ENCODE measurements at regions of chr7 and their contacts with region 1.

Region 1: DNA sequence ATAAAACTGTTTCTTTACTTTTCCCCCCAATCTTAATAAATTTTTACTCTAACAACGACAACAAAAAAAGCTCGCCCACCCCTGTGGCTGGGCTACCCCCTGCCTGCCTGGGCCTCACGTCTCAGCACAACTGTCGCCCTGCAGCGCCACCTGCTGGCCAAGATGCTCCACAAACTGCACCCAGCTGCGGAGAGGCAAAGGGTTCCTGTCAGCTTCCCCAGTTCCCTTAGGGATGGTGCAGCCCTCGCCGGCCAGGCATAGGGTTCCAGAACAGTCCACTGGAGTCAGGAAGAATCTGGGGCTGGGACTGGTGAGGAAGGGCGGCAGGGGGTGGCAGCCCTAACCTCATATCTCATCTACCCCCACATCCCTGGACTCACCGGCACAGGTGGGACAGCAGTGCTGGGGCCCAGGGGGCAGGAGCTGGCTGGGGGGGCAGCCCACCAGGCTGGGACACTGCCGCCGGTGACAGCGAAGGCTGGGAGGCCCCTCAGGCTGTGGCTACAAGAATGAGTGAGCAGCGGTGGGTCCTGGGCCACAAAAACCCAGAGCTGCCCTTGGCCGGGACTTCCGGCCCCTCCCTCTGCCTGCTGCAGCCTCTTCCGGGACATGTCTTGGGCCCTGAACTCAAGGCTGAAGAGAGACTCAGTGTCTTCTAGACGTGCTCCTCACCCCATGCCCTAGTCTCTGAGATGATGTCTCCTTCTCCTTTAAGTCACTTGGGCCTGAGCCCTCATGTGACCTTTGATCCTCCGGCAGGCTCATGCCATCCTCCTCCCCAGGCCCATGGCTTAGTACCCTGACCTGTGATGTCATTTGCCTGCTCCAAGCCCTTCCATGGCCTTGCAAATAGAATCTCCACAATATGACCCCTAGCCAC is 21.2 kb downstream of the ATP6V1F start:
- DNase-seq: peak; percentile 48
- ATAC-seq: peak; percentile 95
- H3K4me3 ChIP-seq: peak overlapping the region; percentile 70
- H3K27ac ChIP-seq: peak overlapping the region; percentile 74
- H3K4me1 ChIP-seq: peaks cover 12% of the 10 kb centered on the region
- H3K27me3 ChIP-seq: no peaks in the 10 kb centered on the region
- CTCF ChIP-seq: peak; percentile 90 to 96 (median 91)
- EP300 ChIP-seq: no peak; a peak in 1 of 4 replicates
- POLR2A ChIP-seq: peak; percentile 77
- RAD21 ChIP-seq: peak; percentile 81

Region 2: GRCh38 chr7:128266883-128267607 is 616.8 kb before region 1 on chr7:
- CTCF ChIA-PET with region 1: no interaction called
- POLR2A ChIA-PET with region 1: no interaction called
- RAD21 ChIA-PET with region 1: no interaction called
- SMC1A ChIA-PET with region 1: no interaction called
- in situ Hi-C with region 1: no loop called
- intact Hi-C with region 1: no loop called
- DNase-seq: no peak
- ATAC-seq: no peak
- H3K4me3 ChIP-seq: no peak overlapping the region
- H3K27ac ChIP-seq: no peak overlapping the region
- H3K4me1 ChIP-seq: no peaks in the 10 kb centered on the region
- H3K27me3 ChIP-seq: peaks cover 0 to 2% of the 10 kb centered on the region in 2 experiments; a peak in 2 of 4 replicates
- CTCF ChIP-seq: no peak
- EP300 ChIP-seq: no peak
- POLR2A ChIP-seq: no peak
- RAD21 ChIP-seq: no peak

Region 3: GRCh38 chr7:128455551-128456254 is 428.2 kb before region 1 on chr7 and contains the start of gene HILPDA:
- CTCF ChIA-PET with region 1: no interaction called
- POLR2A ChIA-PET with region 1: no interaction called
- RAD21 ChIA-PET with region 1: interaction called, 4 read pairs
- SMC1A ChIA-PET with region 1: interaction called, 3 read pairs
- in situ Hi-C with region 1: no loop called
- intact Hi-C with region 1: loop called (anchors 10 kb)
- DNase-seq: peak; percentile 91
- ATAC-seq: peak; percentile 90
- H3K4me3 ChIP-seq: peak within 1 kb of the TSS; percentile 78
- H3K27ac ChIP-seq: peak within 1 kb of the TSS; percentile 84
- H3K4me1 ChIP-seq: peaks cover 29% of the 10 kb centered on the region
- H3K27me3 ChIP-seq: no peaks in the 10 kb centered on the region
- CTCF ChIP-seq: no peak; a peak in 1 of 6 replicates
- EP300 ChIP-seq: peak; percentile 56 to 80; a peak in 3 of 4 replicates
- POLR2A ChIP-seq: peak; percentile 91
- RAD21 ChIP-seq: no peak
- polyA plus RNA-seq, gene HILPDA: 37.4 to 44.0 TPM

Region 4: GRCh38 chr7:128739048-128739962 is 144.6 kb before region 1 on chr7 and contains the start of gene CALU:
- CTCF ChIA-PET with region 1: interaction called, 10 read pairs
- POLR2A ChIA-PET with region 1: no interaction called
- RAD21 ChIA-PET with region 1: interaction called, 8 read pairs
- SMC1A ChIA-PET with region 1: interaction called, 4 read pairs
- in situ Hi-C with region 1: no loop called
- intact Hi-C with region 1: no loop called
- DNase-seq: peak; percentile 78
- ATAC-seq: peak; percentile 99
- H3K4me3 ChIP-seq: peak within 1 kb of the TSS; percentile 87
- H3K27ac ChIP-seq: peak within 1 kb of the TSS; percentile 91
- H3K4me1 ChIP-seq: peaks cover 5% of the 10 kb centered on the region; the same call in 1 of the 2 replicates
- H3K27me3 ChIP-seq: no peaks in the 10 kb centered on the region
- CTCF ChIP-seq: no peak
- EP300 ChIP-seq: no peak
- POLR2A ChIP-seq: peak; percentile 93
- RAD21 ChIP-seq: no peak
- polyA plus RNA-seq, gene CALU: 33.6 to 44.3 TPM

Region 5: DNA sequence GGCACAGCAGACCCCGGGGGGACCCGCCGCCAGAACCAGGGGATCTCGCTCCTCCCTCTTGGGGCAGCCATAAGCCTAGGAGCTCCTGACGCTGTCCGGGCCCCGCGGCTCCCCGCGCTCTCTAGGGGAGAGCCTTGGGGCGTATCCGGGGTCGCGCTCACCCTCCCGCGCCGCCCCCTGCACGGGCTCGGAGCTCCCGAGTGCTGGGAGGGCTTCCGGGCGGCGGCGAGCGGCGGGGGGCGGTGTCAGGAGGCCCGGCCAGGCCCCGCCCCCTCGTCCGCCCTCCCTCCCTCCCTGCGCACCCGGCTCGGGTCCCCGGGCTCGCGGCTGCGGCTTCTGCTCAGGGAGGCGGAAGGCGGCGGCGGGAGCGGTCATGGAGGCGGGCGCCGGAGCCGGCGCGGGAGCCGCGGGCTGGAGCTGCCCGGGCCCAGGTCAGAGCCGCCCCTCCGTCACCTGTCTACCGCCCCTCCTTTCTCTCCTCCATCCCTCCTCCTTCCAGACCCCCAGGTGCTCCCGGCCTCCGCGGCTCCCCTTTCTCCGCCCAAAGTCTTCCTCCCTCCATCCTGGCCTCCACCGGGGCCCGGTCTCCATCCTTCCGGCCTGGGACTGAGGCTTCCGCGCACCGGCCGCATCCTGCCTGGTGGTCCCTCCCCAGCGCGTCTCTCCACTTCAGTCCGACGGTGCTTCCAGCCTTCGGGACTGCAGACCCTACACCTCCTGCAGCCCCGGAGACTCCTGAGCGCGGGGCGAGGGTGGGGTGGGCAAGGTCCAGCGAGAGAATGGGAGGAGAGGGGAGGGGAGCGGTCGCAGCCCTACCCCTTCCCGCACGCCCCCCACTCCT is 92.5 kb before region 1 on chr7:
- CTCF ChIA-PET with region 1: interaction called, 13 read pairs
- POLR2A ChIA-PET with region 1: no interaction called
- RAD21 ChIA-PET with region 1: no interaction called
- SMC1A ChIA-PET with region 1: no interaction called
- in situ Hi-C with region 1: no loop called
- intact Hi-C with region 1: loop called (anchors 5 kb)
- DNase-seq: no peak
- ATAC-seq: peak; percentile 93
- H3K4me3 ChIP-seq: peak overlapping the region; percentile 87
- H3K27ac ChIP-seq: no peak overlapping the region
- H3K4me1 ChIP-seq: peaks cover 3% of the 10 kb centered on the region; the same call in 1 of the 2 replicates
- H3K27me3 ChIP-seq: peaks cover 2% of the 10 kb centered on the region in 2 experiments; a peak in 2 of 4 replicates
- CTCF ChIP-seq: no peak
- EP300 ChIP-seq: no peak
- POLR2A ChIP-seq: peak; percentile 49; the same call in 1 of the 2 replicates
- RAD21 ChIP-seq: no peak

Region 6: GRCh38 chr7:128841921-128842651 is 41.8 kb before region 1 on chr7:
- CTCF ChIA-PET with region 1: interaction called, 21 read pairs
- POLR2A ChIA-PET with region 1: no interaction called
- RAD21 ChIA-PET with region 1: interaction called, 6 read pairs
- SMC1A ChIA-PET with region 1: interaction called, 7 read pairs
- in situ Hi-C with region 1: no loop called
- intact Hi-C with region 1: loop called (anchors 1 kb)
- DNase-seq: no peak
- ATAC-seq: peak; percentile 81
- H3K4me3 ChIP-seq: no peak overlapping the region
- H3K27ac ChIP-seq: no peak overlapping the region
- H3K4me1 ChIP-seq: no peaks in the 10 kb centered on the region; the same call in 1 of the 2 replicates
- H3K27me3 ChIP-seq: no peaks in the 10 kb centered on the region; a peak in 1 of 4 replicates
- CTCF ChIP-seq: peak; percentile 49 to 85 (median 52); a peak in 5 of 6 replicates
- EP300 ChIP-seq: no peak
- POLR2A ChIP-seq: no peak
- RAD21 ChIP-seq: no peak

Region 7: GRCh38 chr7:128862571-128863432 is 21.1 kb before region 1 on chr7 and contains the start of gene ATP6V1F:
- CTCF ChIA-PET with region 1: interaction called, 72 read pairs
- POLR2A ChIA-PET with region 1: interaction called, 8 read pairs
- RAD21 ChIA-PET with region 1: interaction called, 19 read pairs
- SMC1A ChIA-PET with region 1: interaction called, 32 read pairs
- in situ Hi-C with region 1: no loop called
- intact Hi-C with region 1: loop called (anchors 2 kb)
- DNase-seq: peak; percentile 97
- ATAC-seq: peak; percentile 93
- H3K4me3 ChIP-seq: peak within 1 kb of the TSS; percentile 84
- H3K27ac ChIP-seq: peak within 1 kb of the TSS; percentile 62
- H3K4me1 ChIP-seq: peaks cover 8% of the 10 kb centered on the region; the same call in 1 of the 2 replicates
- H3K27me3 ChIP-seq: no peaks in the 10 kb centered on the region
- CTCF ChIP-seq: no peak
- EP300 ChIP-seq: no peak
- POLR2A ChIP-seq: peak; percentile 90
- RAD21 ChIP-seq: no peak
- polyA plus RNA-seq, gene ATP6V1F: 246 to 343 TPM

Region 8: DNA sequence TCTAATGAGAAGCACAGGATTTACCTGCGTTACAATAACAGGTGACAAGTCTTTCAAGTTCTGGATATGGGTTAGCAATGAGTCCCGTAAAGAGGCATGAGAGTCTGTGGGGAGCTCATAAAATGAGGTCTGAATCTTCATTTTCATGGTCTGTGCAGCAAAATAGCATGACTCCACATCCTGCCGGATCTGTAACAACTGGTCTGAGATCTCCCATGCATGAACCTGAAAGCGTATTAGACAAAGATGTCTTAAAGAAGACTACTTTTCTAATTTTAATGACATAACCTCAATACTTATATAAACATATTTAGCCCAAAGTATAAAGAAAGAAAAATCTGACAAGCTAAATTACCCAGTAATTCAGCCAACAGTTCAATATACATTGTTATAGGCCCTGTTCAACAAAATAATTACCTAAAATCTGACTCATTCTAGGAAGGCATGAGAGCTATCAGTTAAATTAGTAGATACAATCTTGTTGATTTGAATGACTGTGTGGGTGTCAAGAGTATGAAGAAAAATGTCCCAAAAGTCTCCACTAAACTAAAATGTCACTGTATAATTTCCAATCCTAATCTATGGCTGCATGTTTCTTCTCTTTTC is 134.2 kb after region 1 on chr7:
- CTCF ChIA-PET with region 1: interaction called, 10 read pairs
- POLR2A ChIA-PET with region 1: no interaction called
- RAD21 ChIA-PET with region 1: no interaction called
- SMC1A ChIA-PET with region 1: no interaction called
- in situ Hi-C with region 1: no loop called
- intact Hi-C with region 1: no loop called
- DNase-seq: peak; percentile 64
- ATAC-seq: peak; percentile 94
- H3K4me3 ChIP-seq: no peak overlapping the region; the same call in 1 of the 2 replicates
- H3K27ac ChIP-seq: peak overlapping the region; percentile 93
- H3K4me1 ChIP-seq: peaks cover 42% of the 10 kb centered on the region
- H3K27me3 ChIP-seq: no peaks in the 10 kb centered on the region
- CTCF ChIP-seq: no peak
- EP300 ChIP-seq: no peak
- POLR2A ChIP-seq: no peak
- RAD21 ChIP-seq: no peak

Region 9: DNA sequence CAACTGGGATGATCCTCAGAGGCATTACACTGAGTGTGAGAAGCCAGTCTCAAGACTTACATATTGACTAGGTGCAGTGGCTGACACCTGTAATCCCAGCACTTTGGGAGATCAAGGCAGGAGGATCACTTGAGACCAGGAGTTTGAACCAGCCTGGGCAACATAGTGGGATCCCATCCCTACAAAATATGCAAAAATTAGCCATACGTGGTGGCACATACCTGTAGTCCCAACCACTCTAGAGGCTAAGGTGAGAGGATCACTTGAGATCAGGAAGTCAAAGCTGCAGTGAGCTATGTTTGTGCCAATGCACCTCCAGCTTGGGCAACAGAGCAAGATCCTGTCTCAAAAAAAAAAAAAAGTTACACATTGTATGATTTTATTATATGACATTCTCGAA is 194.6 kb after region 1 on chr7:
- CTCF ChIA-PET with region 1: no interaction called
- POLR2A ChIA-PET with region 1: no interaction called
- RAD21 ChIA-PET with region 1: no interaction called
- SMC1A ChIA-PET with region 1: no interaction called
- in situ Hi-C with region 1: no loop called
- intact Hi-C with region 1: no loop called
- DNase-seq: no peak
- ATAC-seq: no peak
- H3K4me3 ChIP-seq: no peak overlapping the region
- H3K27ac ChIP-seq: no peak overlapping the region
- H3K4me1 ChIP-seq: peaks cover 8% of the 10 kb centered on the region
- H3K27me3 ChIP-seq: no peaks in the 10 kb centered on the region
- CTCF ChIP-seq: no peak
- EP300 ChIP-seq: no peak
- POLR2A ChIP-seq: no peak
- RAD21 ChIP-seq: no peak